OCI-LY7 (cell line): ENCODE measurements at regions of chr11 and their contacts with region 1.

Region 1: DNA sequence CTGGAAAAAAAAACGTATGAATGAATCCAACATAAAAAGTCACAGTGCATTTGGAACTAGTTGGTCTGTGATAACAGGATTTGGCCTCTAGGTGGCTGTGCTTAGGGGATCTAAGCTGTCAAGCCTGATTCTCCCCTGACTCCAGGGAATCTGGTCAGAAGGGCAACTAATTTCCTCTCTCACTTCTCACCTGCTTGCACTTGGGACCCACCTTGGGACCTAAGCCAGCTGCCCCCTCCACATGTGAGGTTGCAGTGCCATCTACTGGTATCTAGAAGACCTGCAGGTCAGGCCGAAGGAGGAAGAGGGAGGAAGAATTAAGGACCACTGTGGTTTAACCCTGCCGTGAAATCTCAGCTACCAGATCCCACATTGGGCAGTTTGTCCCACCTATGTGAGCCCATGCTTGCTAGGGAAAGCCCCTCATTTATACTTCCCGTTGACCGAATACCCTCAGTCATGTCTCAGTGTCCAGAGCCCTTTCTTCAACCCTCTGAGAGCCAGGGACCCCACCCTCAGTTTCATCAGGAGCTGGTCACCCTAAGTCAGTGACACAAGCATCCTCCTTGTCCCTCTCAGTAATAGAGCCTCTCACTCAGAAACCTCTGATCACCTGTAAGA is 33.2 kb upstream of the CAVIN3 start:
- DNase-seq: peak; percentile 78
- H3K4me3 ChIP-seq: no peak overlapping the region
- H3K27ac ChIP-seq: no peak overlapping the region
- H3K4me1 ChIP-seq: no peaks in the 10 kb centered on the region
- CTCF ChIP-seq: peak; percentile 99

Region 2: DNA sequence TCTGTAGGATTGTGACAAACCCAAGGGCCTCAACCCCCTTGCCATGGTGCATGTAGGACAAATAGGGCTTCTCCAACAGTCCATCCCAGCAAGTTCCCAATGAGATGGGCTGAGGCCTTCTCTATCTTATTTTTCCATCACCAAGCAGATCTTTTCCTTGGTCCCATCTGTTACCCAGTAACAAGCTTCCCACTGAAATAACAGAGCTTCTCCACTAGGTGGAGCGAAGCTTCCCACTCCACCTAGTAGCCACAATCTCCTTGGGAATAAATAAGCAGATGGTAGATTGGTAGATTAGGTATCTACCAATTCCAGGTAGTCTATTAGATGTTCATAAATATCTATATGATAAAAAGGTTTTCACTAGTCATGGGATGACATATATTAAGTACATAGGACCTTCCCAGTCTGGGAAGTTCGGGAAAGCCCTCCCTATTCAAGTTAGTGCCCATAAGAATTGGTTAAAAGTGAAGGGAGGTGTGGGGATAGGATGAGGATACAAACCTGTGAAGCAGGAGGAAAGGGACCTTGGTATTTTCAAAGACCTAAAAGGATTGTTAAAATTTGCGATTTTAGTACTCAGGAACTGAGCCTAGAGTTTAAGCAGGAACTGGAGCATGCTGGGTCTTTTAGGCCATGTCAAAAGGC is 360.7 kb before region 1 on chr11:
- CTCF ChIA-PET with region 1: no interaction called
- POLR2A ChIA-PET with region 1: no interaction called
- intact Hi-C with region 1: loop called (anchors 1 kb)
- DNase-seq: peak; percentile 25
- H3K4me3 ChIP-seq: no peak overlapping the region
- H3K27ac ChIP-seq: no peak overlapping the region
- H3K4me1 ChIP-seq: no peaks in the 10 kb centered on the region
- CTCF ChIP-seq: peak; percentile 80

Region 3: GRCh38 chr11:6022956-6023355 is 330.5 kb before region 1 on chr11:
- CTCF ChIA-PET with region 1: interaction called, 4 read pairs
- POLR2A ChIA-PET with region 1: no interaction called
- intact Hi-C with region 1: loop called (anchors 1 kb)
- DNase-seq: peak; percentile 61
- H3K4me3 ChIP-seq: no peak overlapping the region
- H3K27ac ChIP-seq: no peak overlapping the region
- H3K4me1 ChIP-seq: no peaks in the 10 kb centered on the region
- CTCF ChIP-seq: peak; percentile 79

Region 4: GRCh38 chr11:6251120-6251733 is 102.2 kb before region 1 on chr11:
- CTCF ChIA-PET with region 1: no interaction called
- POLR2A ChIA-PET with region 1: interaction called, 3 read pairs
- intact Hi-C with region 1: loop called (anchors 1 kb)
- DNase-seq: peak; percentile 47
- H3K4me3 ChIP-seq: no peak overlapping the region
- H3K27ac ChIP-seq: no peak overlapping the region
- H3K4me1 ChIP-seq: no peaks in the 10 kb centered on the region
- CTCF ChIP-seq: peak; percentile 80

Region 5: GRCh38 chr11:6298605-6299004 is 54.9 kb before region 1 on chr11:
- CTCF ChIA-PET with region 1: interaction called, 3 read pairs
- POLR2A ChIA-PET with region 1: no interaction called
- intact Hi-C with region 1: loop called (anchors 5 kb)
- DNase-seq: peak; percentile 53
- H3K4me3 ChIP-seq: no peak overlapping the region
- H3K27ac ChIP-seq: no peak overlapping the region
- H3K4me1 ChIP-seq: no peaks in the 10 kb centered on the region
- CTCF ChIP-seq: peak; percentile 74